ENCODE measurements at regions of chr7 and their contacts with region 1.

Region 1: DNA sequence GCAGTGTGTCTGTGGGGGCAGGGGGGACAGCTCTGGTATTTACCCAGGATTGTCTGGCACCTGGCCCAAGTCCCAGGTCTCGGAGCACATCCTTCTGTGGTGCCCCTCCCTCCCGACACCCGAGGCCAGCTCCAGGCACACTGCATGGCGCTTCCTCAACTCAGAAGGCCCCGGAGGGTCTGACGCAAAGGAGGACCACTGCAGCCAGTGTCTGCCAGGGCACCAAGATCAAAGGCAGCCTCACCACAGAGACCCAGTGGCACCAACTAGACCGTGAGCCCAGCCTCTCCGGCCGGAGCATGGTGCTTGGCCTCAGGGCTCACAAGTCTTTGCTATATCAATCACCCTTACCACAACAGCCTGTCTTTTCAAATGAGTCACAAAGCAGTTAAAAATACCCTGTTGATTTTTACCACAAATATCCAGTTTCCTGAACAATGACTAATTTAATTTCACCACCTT is 99.3 kb upstream of the DDC start:
- DNase-seq: peak; percentile 53 to 95 (median 90)
- H3K4me3 ChIP-seq: peak overlapping the region in 2 of 7 experiments; percentile 26 to 32
- H3K27ac ChIP-seq: peak overlapping the region in 1 of 2 experiments; percentile 68
- H3K4me1 ChIP-seq: peaks cover 12 to 70% (median 66%) of the 10 kb centered on the region in 4 experiments
- H3K27me3 ChIP-seq: no peaks in the 10 kb centered on the region

Region 2: GRCh38 chr7:50648570-50649169 is 15.8 kb before region 1 on chr7:
- CTCF ChIA-PET with region 1: interaction called, 13 read pairs
- POLR2A ChIA-PET with region 1: no interaction called
- DNase-seq: no peak
- H3K4me3 ChIP-seq: no peak overlapping the region
- H3K27ac ChIP-seq: no peak overlapping the region
- H3K4me1 ChIP-seq: peaks cover 0 to 12% (median 10%) of the 10 kb centered on the region in 4 experiments
- H3K27me3 ChIP-seq: no peaks in the 10 kb centered on the region